GM12878 (cell line): ENCODE measurements at regions of chr7 and their contacts with region 1.

Region 1: DNA sequence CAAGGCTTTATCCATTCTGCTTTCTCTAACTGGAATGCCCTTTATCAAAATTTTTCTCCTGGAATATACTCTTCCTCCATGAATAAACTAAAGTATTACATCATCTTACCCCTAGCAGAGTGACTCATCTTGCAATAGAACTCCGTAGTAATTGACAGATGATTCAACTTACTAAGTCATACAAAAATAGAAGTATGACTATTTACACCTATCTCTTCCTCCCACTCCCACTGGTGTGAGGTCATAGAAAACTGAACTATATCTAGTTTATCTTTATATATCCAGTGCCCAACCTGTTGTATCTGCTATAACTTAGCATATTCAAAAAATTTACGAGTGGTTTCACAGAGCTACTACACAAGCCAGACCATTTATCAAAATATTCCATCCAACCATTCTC is 26.1 kb downstream of the ABCB1 start:
- DNase-seq: no peak
- ATAC-seq: peak; percentile 78
- H3K4me3 ChIP-seq: no peak overlapping the region
- H3K27ac ChIP-seq: no peak overlapping the region
- H3K4me1 ChIP-seq: no peaks in the 10 kb centered on the region
- H3K27me3 ChIP-seq: no peaks in the 10 kb centered on the region
- CTCF ChIP-seq: no peak
- EP300 ChIP-seq: no peak
- POLR2A ChIP-seq: no peak
- RAD21 ChIP-seq: no peak

Region 2: DNA sequence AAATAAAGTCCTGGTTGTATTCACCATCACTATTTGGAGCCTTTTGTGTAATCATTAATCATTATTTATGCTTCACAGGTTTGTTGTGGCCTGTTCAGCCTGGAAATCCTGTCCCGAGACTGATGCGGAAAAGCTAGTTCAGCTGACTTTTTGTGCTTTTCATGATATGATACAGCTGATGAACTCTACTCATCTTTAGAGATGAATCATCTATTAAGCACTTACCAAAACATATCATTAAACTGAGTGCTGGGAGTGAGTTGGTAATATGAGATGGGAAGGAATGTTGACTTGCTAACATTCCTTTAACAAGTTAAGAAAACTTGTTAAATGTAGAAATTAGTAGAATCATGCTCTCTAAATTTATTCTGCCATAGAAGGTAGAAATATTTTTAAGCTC is 176.2 kb before region 1 on chr7:
- CTCF ChIA-PET with region 1: no interaction called
- POLR2A ChIA-PET with region 1: no interaction called
- RAD21 ChIA-PET with region 1: no interaction called
- SMC1A ChIA-PET with region 1: no interaction called
- in situ Hi-C with region 1: no loop called
- intact Hi-C with region 1: no loop called
- DNase-seq: no peak
- ATAC-seq: no peak
- H3K4me3 ChIP-seq: no peak overlapping the region
- H3K27ac ChIP-seq: no peak overlapping the region
- H3K4me1 ChIP-seq: no peaks in the 10 kb centered on the region
- H3K27me3 ChIP-seq: no peaks in the 10 kb centered on the region
- CTCF ChIP-seq: no peak
- EP300 ChIP-seq: no peak
- POLR2A ChIP-seq: no peak
- RAD21 ChIP-seq: no peak

Region 3: GRCh38 chr7:87564289-87564963 is 10.2 kb before region 1 on chr7:
- CTCF ChIA-PET with region 1: interaction called, 39 read pairs
- POLR2A ChIA-PET with region 1: no interaction called
- RAD21 ChIA-PET with region 1: no interaction called
- SMC1A ChIA-PET with region 1: interaction called, 10 read pairs
- in situ Hi-C with region 1: no loop called
- intact Hi-C with region 1: no loop called
- DNase-seq: no peak
- ATAC-seq: peak; percentile 98
- H3K4me3 ChIP-seq: no peak overlapping the region
- H3K27ac ChIP-seq: no peak overlapping the region
- H3K4me1 ChIP-seq: no peaks in the 10 kb centered on the region
- H3K27me3 ChIP-seq: no peaks in the 10 kb centered on the region
- CTCF ChIP-seq: peak; percentile 52 to 74 (median 54)
- EP300 ChIP-seq: no peak
- POLR2A ChIP-seq: no peak
- RAD21 ChIP-seq: peak; percentile 55

Region 4: GRCh38 chr7:87590578-87590977 is 15.9 kb after region 1 on chr7:
- CTCF ChIA-PET with region 1: interaction called, 3 read pairs
- POLR2A ChIA-PET with region 1: interaction called, 6 read pairs
- RAD21 ChIA-PET with region 1: no interaction called
- SMC1A ChIA-PET with region 1: interaction called, 10 read pairs
- in situ Hi-C with region 1: no loop called
- intact Hi-C with region 1: no loop called
- DNase-seq: no peak
- ATAC-seq: peak; percentile 21; the same call in 2 of the 3 replicates
- H3K4me3 ChIP-seq: no peak overlapping the region
- H3K27ac ChIP-seq: no peak overlapping the region
- H3K4me1 ChIP-seq: no peaks in the 10 kb centered on the region
- H3K27me3 ChIP-seq: no peaks in the 10 kb centered on the region
- CTCF ChIP-seq: no peak
- EP300 ChIP-seq: no peak
- POLR2A ChIP-seq: no peak
- RAD21 ChIP-seq: no peak

Region 5: DNA sequence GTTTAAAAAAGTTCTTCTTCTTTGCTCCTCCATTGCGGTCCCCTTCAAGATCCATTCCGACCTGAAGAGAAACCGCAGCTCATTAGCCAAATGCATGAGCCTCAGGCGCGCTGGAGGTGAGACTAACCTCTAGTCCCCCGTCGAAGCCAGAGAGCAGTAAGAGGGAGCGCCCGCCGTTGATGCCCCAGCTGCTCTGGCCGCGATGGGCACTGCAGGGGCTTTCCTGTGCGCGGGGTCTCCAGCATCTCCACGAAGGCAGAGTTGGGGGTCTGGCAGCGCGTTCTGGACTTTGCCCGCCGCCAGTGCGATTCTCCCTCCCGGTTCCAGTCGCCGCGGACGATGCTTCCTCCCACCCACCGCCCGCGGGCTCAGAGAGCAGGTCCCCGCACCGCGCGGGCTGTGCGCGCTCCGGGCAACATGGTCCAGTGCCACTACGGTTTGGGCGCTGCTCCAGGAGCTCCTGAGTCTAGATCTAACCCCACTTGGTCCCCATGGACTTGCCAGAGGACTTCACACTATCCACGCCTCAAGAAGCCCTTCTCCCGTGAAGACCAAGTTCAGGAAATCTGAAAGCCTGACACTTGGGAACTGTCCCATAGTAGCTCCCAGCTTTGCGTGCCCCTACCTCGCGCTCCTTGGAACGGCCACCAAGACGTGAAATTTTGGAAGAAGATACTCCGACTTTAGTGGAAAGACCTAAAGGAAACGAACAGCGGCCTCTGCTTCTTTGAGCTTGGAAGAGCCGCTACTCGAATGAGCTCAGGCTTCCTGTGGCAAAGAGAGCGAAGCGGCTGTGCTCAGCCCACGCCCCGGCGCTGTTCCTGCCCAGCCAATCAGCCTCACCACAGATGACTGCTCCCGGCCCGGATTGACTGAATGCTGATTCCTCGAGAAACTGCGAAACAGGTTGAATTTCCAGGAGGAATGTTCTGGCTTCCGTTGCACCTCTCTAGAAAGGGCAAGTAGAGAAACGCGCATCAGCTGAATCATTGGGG is 25.8 kb after region 1 on chr7 and contains the start of gene ABCB1:
- CTCF ChIA-PET with region 1: interaction called, 6 read pairs
- POLR2A ChIA-PET with region 1: interaction called, 3 read pairs
- RAD21 ChIA-PET with region 1: interaction called, 6 read pairs
- SMC1A ChIA-PET with region 1: interaction called, 16 read pairs
- in situ Hi-C with region 1: no loop called
- intact Hi-C with region 1: no loop called
- DNase-seq: no peak
- ATAC-seq: peak; percentile 77
- H3K4me3 ChIP-seq: peak within 1 kb of the TSS; percentile 50; the same call in 1 of the 2 replicates
- H3K27ac ChIP-seq: no peak within 1 kb of the TSS
- H3K4me1 ChIP-seq: peaks cover 22% of the 10 kb centered on the region
- H3K27me3 ChIP-seq: peaks cover 0 to 7% of the 10 kb centered on the region in 2 experiments; a peak in 1 of 4 replicates
- CTCF ChIP-seq: no peak; a peak in 1 of 6 replicates
- EP300 ChIP-seq: 0 out of 4 replicates have a peak, but pooled peaks of 1 of the 2 experiments have one; percentile 12
- POLR2A ChIP-seq: no peak
- RAD21 ChIP-seq: no peak
- polyA plus RNA-seq, gene ABCB1: 0.40 to 1.1 TPM